ENCODE measurements at regions of chr6 and their contacts with region 1.

Region 1: GRCh38 chr6:144131248-144131709 is 19.0 kb upstream of the STX11 start:
- DNase-seq: no peak
- H3K4me3 Mint-ChIP-seq: peak overlapping the region; percentile 59
- H3K27ac Mint-ChIP-seq: peak overlapping the region; percentile 74
- H3K4me1 Mint-ChIP-seq: peaks cover 31% of the 10 kb centered on the region
- H3K27me3 Mint-ChIP-seq: peaks cover 3% of the 10 kb centered on the region

Region 2: GRCh38 chr6:144013486-144013909 is 117.8 kb before region 1 on chr6:
- CTCF ChIA-PET with region 1: no interaction called
- POLR2A ChIA-PET with region 1: no interaction called
- intact Hi-C with region 1: no loop called
- DNase-seq: peak; percentile 71
- H3K4me3 Mint-ChIP-seq: no peak overlapping the region
- H3K27ac Mint-ChIP-seq: no peak overlapping the region
- H3K4me1 Mint-ChIP-seq: peaks cover 3% of the 10 kb centered on the region
- H3K27me3 Mint-ChIP-seq: peaks cover 7% of the 10 kb centered on the region

Region 3: GRCh38 chr6:144095331-144096002 is 35.8 kb before region 1 on chr6 and contains the start of gene SF3B5:
- CTCF ChIA-PET with region 1: no interaction called
- POLR2A ChIA-PET with region 1: no interaction called
- intact Hi-C with region 1: loop called (anchors 1 kb)
- DNase-seq: peak; percentile 99
- H3K4me3 Mint-ChIP-seq: peak within 1 kb of the TSS; percentile 93
- H3K27ac Mint-ChIP-seq: peak within 1 kb of the TSS; percentile 96
- H3K4me1 Mint-ChIP-seq: peaks cover 25% of the 10 kb centered on the region
- H3K27me3 Mint-ChIP-seq: no peaks in the 10 kb centered on the region
- total RNA-seq, gene SF3B5: 162 to 171 TPM

Region 4: DNA sequence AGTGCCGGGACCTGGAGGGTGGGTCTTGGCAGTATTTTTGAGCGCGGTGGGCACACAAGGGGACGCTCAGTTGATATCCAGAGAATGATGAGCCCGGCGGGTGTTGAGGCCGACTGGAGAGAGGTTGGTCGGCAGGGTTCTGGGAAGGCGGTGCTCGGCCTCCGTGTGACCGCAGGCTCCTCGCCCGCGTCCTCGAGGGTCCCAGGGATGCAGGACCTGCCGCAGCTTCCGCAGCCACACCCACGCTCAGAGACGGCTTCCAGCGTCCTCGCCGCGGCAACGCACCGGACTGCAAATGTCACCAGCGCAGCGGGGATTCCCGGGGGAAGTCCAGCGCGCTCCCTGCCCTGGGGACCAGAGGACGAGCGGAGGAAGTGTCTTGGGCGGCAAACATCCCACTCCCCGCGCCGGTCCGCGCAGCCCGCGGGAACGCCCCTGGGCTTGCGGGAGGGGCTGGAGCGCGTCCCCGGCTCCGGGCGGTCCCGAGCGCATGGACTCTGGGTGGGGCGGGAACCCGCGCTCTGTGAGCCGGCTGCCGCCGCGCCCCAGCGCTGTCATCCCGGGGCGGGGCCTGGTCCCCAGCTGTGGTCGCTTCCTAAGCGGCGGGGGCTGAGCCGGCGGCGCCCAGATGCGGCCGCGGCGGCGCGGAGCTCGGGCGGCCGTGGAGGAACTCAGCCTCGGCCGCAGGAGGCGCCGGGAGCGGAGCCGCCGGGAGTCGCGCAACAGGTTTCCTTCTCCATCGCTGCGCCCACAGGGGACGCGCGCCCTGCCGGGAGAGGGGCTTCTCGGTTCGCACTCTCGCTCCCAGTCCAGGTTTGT is 18.8 kb after region 1 on chr6 and contains the start of gene STX11:
- CTCF ChIA-PET with region 1: interaction called, 3 read pairs
- POLR2A ChIA-PET with region 1: interaction called, 6 read pairs
- intact Hi-C with region 1: loop called (anchors 1 kb)
- DNase-seq: peak; percentile 88
- H3K4me3 Mint-ChIP-seq: peak within 1 kb of the TSS; percentile 88
- H3K27ac Mint-ChIP-seq: peak within 1 kb of the TSS; percentile 98
- H3K4me1 Mint-ChIP-seq: peaks cover 41% of the 10 kb centered on the region
- H3K27me3 Mint-ChIP-seq: no peaks in the 10 kb centered on the region
- total RNA-seq, gene STX11: 16.0 to 16.6 TPM

Region 5: GRCh38 chr6:144179828-144180227 is 48.5 kb after region 1 on chr6:
- CTCF ChIA-PET with region 1: no interaction called
- POLR2A ChIA-PET with region 1: interaction called, 4 read pairs
- intact Hi-C with region 1: loop called (anchors 1 kb)
- DNase-seq: no peak
- H3K4me3 Mint-ChIP-seq: no peak overlapping the region
- H3K27ac Mint-ChIP-seq: no peak overlapping the region
- H3K4me1 Mint-ChIP-seq: peaks cover 52% of the 10 kb centered on the region
- H3K27me3 Mint-ChIP-seq: no peaks in the 10 kb centered on the region

Region 6: DNA sequence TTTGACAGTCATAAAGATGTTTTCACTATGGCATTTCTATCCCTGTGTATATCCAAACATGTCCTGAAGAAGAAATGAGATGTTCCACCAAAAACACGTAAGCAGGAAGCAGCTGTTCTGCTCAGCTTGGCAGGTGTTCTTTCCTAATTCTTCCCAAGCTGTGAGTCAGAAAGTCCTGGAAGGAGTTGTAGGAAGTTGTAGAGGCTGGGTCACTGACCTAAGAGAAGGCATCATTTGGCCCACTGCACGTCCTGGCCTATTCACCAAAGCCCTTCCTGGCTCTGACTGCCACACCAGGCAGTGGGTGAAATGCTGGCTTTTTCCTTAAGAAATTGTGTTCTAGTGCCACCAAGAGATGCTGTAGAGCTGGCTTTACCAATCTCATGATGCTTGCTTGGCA is 59.3 kb after region 1 on chr6:
- CTCF ChIA-PET with region 1: no interaction called
- POLR2A ChIA-PET with region 1: no interaction called
- intact Hi-C with region 1: no loop called
- DNase-seq: no peak
- H3K4me3 Mint-ChIP-seq: no peak overlapping the region
- H3K27ac Mint-ChIP-seq: no peak overlapping the region
- H3K4me1 Mint-ChIP-seq: peaks cover 2% of the 10 kb centered on the region
- H3K27me3 Mint-ChIP-seq: no peaks in the 10 kb centered on the region

Region 7: DNA sequence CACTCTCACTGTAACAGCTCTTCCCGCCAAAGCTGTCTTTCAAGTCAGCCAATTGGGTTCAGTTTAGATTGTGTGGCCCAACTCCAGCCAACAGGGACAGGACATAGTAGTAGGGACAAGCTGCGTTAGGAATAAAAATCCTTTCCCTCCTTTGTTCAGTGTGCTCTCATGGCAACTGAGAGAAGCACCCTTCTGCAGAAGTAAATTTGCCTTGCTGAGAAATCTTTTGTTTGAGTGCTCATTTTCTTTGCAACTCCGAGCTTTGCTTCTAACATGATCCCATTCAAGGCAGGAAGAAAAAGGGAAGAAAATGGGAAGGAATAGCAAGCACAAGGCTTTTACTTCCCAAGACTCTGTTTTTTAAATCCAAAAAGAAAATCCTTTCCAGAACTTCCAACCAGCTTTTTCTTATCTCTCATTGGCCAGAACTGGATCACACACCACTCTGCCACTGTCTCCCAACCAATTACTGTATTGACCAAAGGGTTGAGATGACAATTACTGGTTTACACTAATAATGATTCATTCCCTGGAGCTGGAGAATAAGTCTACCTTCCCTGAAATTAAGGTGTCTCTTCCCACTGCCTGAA is 71.7 kb after region 1 on chr6:
- CTCF ChIA-PET with region 1: no interaction called
- POLR2A ChIA-PET with region 1: no interaction called
- intact Hi-C with region 1: no loop called
- DNase-seq: no peak
- H3K4me3 Mint-ChIP-seq: no peak overlapping the region
- H3K27ac Mint-ChIP-seq: no peak overlapping the region
- H3K4me1 Mint-ChIP-seq: peaks cover 6% of the 10 kb centered on the region
- H3K27me3 Mint-ChIP-seq: peaks cover 12% of the 10 kb centered on the region

Region 8: GRCh38 chr6:144543006-144543871 is 412.0 kb after region 1 on chr6:
- CTCF ChIA-PET with region 1: no interaction called
- POLR2A ChIA-PET with region 1: no interaction called
- intact Hi-C with region 1: loop called (anchors 1 kb)
- DNase-seq: peak; percentile 32
- H3K4me3 Mint-ChIP-seq: no peak overlapping the region
- H3K27ac Mint-ChIP-seq: no peak overlapping the region
- H3K4me1 Mint-ChIP-seq: peaks cover 20% of the 10 kb centered on the region
- H3K27me3 Mint-ChIP-seq: no peaks in the 10 kb centered on the region

Region 9: GRCh38 chr6:144659202-144660182 is 528.2 kb after region 1 on chr6:
- CTCF ChIA-PET with region 1: no interaction called
- POLR2A ChIA-PET with region 1: no interaction called
- intact Hi-C with region 1: loop called (anchors 10 kb)
- DNase-seq: peak; percentile 19
- H3K4me3 Mint-ChIP-seq: peak overlapping the region; percentile 52
- H3K27ac Mint-ChIP-seq: peak overlapping the region; percentile 81
- H3K4me1 Mint-ChIP-seq: peaks cover 64% of the 10 kb centered on the region
- H3K27me3 Mint-ChIP-seq: no peaks in the 10 kb centered on the region

Measured in activated CD4-positive, alpha-beta memory T cell treated with anti-CD3 and anti-CD28 coated beads for 36 hours (primary cell).